ENCODE measurements at regions of chr1 and their contacts with region 1.

Region 1: GRCh38 chr1:93814059-93814794 is 64.8 kb downstream of the DNTTIP2 start:
- DNase-seq: no peak
- H3K4me3 ChIP-seq: no peak overlapping the region
- CTCF ChIP-seq: peak; percentile 93

Region 2: GRCh38 chr1:93537924-93538323 is 276.3 kb before region 1 on chr1:
- CTCF ChIA-PET with region 1: no interaction called
- POLR2A ChIA-PET with region 1: no interaction called
- DNase-seq: no peak
- H3K4me3 ChIP-seq: no peak overlapping the region
- CTCF ChIP-seq: no peak

Region 3: DNA sequence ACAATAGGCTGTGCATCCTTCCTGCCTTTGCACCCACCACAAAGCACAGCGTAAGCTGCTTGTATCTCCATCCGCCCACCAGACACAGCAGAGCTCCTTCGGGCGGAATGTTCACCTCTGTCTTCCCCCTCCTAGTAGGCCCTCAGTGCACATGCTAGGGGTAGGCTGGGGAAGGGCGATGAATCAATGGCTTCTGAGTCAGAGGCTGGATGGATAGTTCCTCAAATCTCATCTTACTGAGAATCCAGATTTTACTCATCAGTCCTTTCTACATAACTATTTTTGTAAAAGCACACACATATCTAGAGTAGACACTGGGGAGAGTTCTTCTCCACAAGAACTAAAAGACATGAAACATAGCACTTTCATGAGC is 206.4 kb before region 1 on chr1:
- CTCF ChIA-PET with region 1: interaction called, 43 read pairs
- POLR2A ChIA-PET with region 1: no interaction called
- DNase-seq: no peak
- H3K4me3 ChIP-seq: no peak overlapping the region
- CTCF ChIP-seq: no peak

Region 4: GRCh38 chr1:93638981-93639380 is 175.2 kb before region 1 on chr1:
- CTCF ChIA-PET with region 1: interaction called, 437 read pairs
- POLR2A ChIA-PET with region 1: no interaction called
- DNase-seq: no peak
- H3K4me3 ChIP-seq: no peak overlapping the region
- CTCF ChIP-seq: no peak

Region 5: GRCh38 chr1:93680757-93681550 is 133.3 kb before region 1 on chr1:
- CTCF ChIA-PET with region 1: interaction called, 40 read pairs
- POLR2A ChIA-PET with region 1: interaction called, 15 read pairs
- DNase-seq: no peak
- H3K4me3 ChIP-seq: peak overlapping the region; percentile 75
- CTCF ChIP-seq: peak; percentile 83

Region 6: DNA sequence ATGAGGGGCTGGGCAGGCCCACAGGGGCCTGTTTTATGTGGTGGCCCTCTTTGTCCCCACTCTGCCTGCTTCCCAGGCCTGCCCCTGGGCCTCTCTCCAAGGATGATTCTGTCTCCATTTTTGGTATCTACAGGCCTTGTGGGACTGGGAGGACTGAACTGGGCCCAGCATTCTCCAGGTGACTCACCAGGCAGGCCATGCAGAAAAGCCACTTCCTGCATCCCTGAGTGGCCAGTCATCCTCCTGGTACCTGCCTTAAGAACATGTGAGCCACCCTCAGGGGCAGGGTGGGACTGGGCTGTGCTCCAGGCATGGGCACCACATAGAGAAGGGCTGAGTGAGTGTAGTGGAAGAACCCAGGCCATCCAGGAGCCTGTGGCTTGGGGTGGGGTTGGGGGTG is 112.6 kb before region 1 on chr1:
- CTCF ChIA-PET with region 1: interaction called, 16 read pairs
- POLR2A ChIA-PET with region 1: interaction called, 4 read pairs
- DNase-seq: peak; percentile 97
- H3K4me3 ChIP-seq: no peak overlapping the region
- CTCF ChIP-seq: no peak

Region 7: GRCh38 chr1:93749894-93750301 is 64.3 kb before region 1 on chr1:
- CTCF ChIA-PET with region 1: interaction called, 16 read pairs
- POLR2A ChIA-PET with region 1: no interaction called
- DNase-seq: no peak
- H3K4me3 ChIP-seq: no peak overlapping the region
- CTCF ChIP-seq: peak; percentile 4

Region 8: GRCh38 chr1:93768380-93768863 is 45.8 kb before region 1 on chr1:
- CTCF ChIA-PET with region 1: no interaction called
- POLR2A ChIA-PET with region 1: no interaction called
- DNase-seq: no peak
- H3K4me3 ChIP-seq: no peak overlapping the region
- CTCF ChIP-seq: no peak

Region 9: GRCh38 chr1:93846211-93846991 is 32.2 kb after region 1 on chr1:
- CTCF ChIA-PET with region 1: interaction called, 158 read pairs
- POLR2A ChIA-PET with region 1: interaction called, 3 read pairs
- DNase-seq: no peak
- H3K4me3 ChIP-seq: peak overlapping the region; percentile 83
- CTCF ChIP-seq: peak; percentile 57

Measured in AG04449 (cell line).